Mammary epithelial cell (primary cell): ENCODE measurements at regions of chr14 and their contacts with region 1.

Region 1: GRCh38 chr14:91286530-91286937 is 42.0 kb upstream of the GPR68 start:
- DNase-seq: peak; percentile 64
- H3K4me3 ChIP-seq: no peak overlapping the region
- H3K27ac ChIP-seq: no peak overlapping the region
- H3K4me1 ChIP-seq: peaks cover 23% of the 10 kb centered on the region
- H3K27me3 ChIP-seq: no peaks in the 10 kb centered on the region
- CTCF ChIP-seq: peak; percentile 83 to 94

Region 2: DNA sequence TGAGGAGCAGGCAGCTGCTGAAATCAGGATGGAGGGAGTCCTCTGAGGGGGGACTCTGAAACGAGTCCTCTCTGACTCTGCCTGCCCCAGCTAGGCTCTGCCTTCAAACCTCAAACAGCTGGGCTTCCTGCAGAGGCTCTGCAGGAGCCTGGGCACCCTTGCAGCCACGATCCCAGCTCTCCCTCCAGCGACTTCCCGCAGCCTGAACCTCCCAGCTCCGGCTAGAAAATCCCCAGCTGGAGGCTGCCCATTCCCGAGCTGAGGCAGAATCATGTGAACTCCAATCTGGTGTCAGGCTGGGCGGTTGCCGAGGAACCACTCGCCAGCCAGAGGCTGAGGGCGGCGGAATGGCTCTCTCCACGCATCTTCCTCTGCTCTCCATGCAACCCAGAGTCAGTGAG is 42.0 kb before region 1 on chr14 and contains the start of gene GPR68:
- CTCF ChIA-PET with region 1: no interaction called
- dilution Hi-C with region 1: no loop called
- in situ Hi-C with region 1: no loop called
- intact Hi-C with region 1: no loop called
- DNase-seq: no peak
- H3K4me3 ChIP-seq: no peak within 1 kb of the TSS
- H3K27ac ChIP-seq: no peak within 1 kb of the TSS
- H3K4me1 ChIP-seq: no peaks in the 10 kb centered on the region
- H3K27me3 ChIP-seq: no peaks in the 10 kb centered on the region
- CTCF ChIP-seq: no peak
- total RNA-seq, gene GPR68: 0.83 TPM in 1 of 2 donors, not detected in the other

Region 3: GRCh38 chr14:91255026-91255695 is 31.4 kb before region 1 on chr14:
- CTCF ChIA-PET with region 1: interaction called, 3 read pairs
- dilution Hi-C with region 1: no loop called
- in situ Hi-C with region 1: no loop called
- intact Hi-C with region 1: loop called (anchors 1 kb)
- DNase-seq: no peak
- H3K4me3 ChIP-seq: no peak overlapping the region
- H3K27ac ChIP-seq: no peak overlapping the region
- H3K4me1 ChIP-seq: peaks cover 11% of the 10 kb centered on the region
- H3K27me3 ChIP-seq: no peaks in the 10 kb centered on the region
- CTCF ChIP-seq: peak in 1 of 2 donors; percentile 10

Region 4: GRCh38 chr14:91269076-91269991 is 17.2 kb before region 1 on chr14:
- CTCF ChIA-PET with region 1: no interaction called
- dilution Hi-C with region 1: no loop called
- in situ Hi-C with region 1: no loop called
- intact Hi-C with region 1: no loop called
- DNase-seq: no peak
- H3K4me3 ChIP-seq: no peak overlapping the region
- H3K27ac ChIP-seq: no peak overlapping the region
- H3K4me1 ChIP-seq: peaks cover 9% of the 10 kb centered on the region
- H3K27me3 ChIP-seq: no peaks in the 10 kb centered on the region
- CTCF ChIP-seq: no peak

Region 5: GRCh38 chr14:91303091-91303923 is 16.8 kb after region 1 on chr14:
- CTCF ChIA-PET with region 1: no interaction called
- dilution Hi-C with region 1: no loop called
- in situ Hi-C with region 1: no loop called
- intact Hi-C with region 1: no loop called
- DNase-seq: no peak
- H3K4me3 ChIP-seq: no peak overlapping the region
- H3K27ac ChIP-seq: no peak overlapping the region
- H3K4me1 ChIP-seq: no peaks in the 10 kb centered on the region
- H3K27me3 ChIP-seq: no peaks in the 10 kb centered on the region
- CTCF ChIP-seq: no peak

Region 6: DNA sequence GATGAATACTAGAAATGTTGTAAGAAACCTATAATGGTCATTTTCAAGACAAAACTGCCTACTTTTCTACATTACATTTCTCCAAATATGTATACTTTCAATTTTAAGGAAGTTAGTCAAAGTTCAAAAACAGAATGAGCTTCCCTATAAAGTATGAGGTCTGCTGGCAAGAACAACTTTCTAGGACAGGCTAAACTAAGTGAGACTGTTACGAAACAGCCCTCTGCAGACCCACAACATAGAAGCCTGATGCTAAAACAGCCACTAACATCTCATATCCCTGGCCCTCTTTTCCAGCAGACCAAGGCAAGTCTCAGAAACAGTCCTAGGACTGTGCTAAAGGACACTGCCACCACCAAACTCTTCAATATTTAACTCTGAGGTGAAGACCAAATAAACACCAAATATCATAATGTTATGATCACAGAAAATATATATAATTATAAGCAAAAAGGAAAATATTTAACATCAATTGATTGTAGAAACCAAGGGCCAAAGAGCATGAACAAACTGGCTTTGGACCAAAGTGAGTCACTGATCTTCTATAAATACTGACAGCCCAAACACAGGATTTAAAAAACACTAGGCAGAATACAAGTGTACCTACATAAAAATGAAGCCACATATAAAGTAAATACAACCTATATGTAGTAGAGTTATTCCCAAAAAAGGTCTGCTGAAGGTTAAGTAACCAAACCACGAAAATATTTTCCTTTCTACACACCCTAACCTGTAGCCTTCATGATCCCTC is 195.9 kb after region 1 on chr14:
- CTCF ChIA-PET with region 1: no interaction called
- dilution Hi-C with region 1: no loop called
- in situ Hi-C with region 1: no loop called
- intact Hi-C with region 1: no loop called
- DNase-seq: no peak
- H3K4me3 ChIP-seq: no peak overlapping the region
- H3K27ac ChIP-seq: no peak overlapping the region
- H3K4me1 ChIP-seq: no peaks in the 10 kb centered on the region
- H3K27me3 ChIP-seq: no peaks in the 10 kb centered on the region
- CTCF ChIP-seq: no peak